Kidney (tissue), 22 donors: ENCODE measurements at regions of chr1 and their contacts with region 1.

Region 1: DNA sequence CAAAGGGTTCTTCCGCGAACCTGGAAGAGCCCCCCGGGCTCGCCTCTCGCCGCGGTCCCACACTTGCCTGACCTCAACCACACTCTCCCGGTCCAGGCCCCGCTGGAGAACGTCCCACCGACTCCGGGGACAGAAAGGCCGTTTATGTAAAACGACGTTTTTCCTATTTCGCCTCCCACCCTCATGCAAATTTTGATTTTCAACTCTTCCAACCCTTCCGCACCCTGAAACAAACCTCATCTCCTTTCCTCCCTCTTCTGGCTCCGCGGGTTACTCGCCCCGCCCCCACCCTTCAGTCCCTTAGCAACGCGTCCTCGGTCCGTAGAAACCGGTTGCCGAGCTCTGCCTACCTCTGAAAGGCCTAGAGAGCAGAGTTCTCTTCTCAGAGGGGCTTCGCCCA is at the start of gene C1orf141:
- DNase-seq: peak in 4 of 5 donors; percentile 62 to 83 (median 70)
- H3K4me3 ChIP-seq: peak within 1 kb of the TSS; percentile 21 to 65 (median 52)
- H3K27ac ChIP-seq: no peak within 1 kb of the TSS
- H3K4me1 ChIP-seq: peaks cover 0 to 12% (median 3%) of the 10 kb centered on the region in 3 donors
- H3K27me3 ChIP-seq: no peaks in the 10 kb centered on the region
- CTCF ChIP-seq: no peak
- total RNA-seq, gene C1orf141: not detected

Region 2: GRCh38 chr1:66996018-66996682 is 138.5 kb before region 1 on chr1:
- intact Hi-C with region 1: loop called (anchors 10 kb)
- DNase-seq: peak in 4 of 5 donors; percentile 58 to 88 (median 77)
- H3K4me3 ChIP-seq: no peak overlapping the region
- H3K27ac ChIP-seq: no peak overlapping the region
- H3K4me1 ChIP-seq: peaks cover 0 to under 1% (median 0%) of the 10 kb centered on the region in 3 donors
- H3K27me3 ChIP-seq: no peaks in the 10 kb centered on the region
- CTCF ChIP-seq: peak; percentile 81